Mammary epithelial cell (primary cell): ENCODE measurements at regions of chr15 and their contacts with region 1.

Region 1: GRCh38 chr15:73677146-73677607 is 7.0 kb upstream of the CD276 start:
- DNase-seq: peak; percentile 55
- H3K4me3 ChIP-seq: no peak overlapping the region
- H3K27ac ChIP-seq: no peak overlapping the region
- H3K4me1 ChIP-seq: no peaks in the 10 kb centered on the region
- H3K27me3 ChIP-seq: no peaks in the 10 kb centered on the region
- CTCF ChIP-seq: peak; percentile 88 to 89

Region 2: DNA sequence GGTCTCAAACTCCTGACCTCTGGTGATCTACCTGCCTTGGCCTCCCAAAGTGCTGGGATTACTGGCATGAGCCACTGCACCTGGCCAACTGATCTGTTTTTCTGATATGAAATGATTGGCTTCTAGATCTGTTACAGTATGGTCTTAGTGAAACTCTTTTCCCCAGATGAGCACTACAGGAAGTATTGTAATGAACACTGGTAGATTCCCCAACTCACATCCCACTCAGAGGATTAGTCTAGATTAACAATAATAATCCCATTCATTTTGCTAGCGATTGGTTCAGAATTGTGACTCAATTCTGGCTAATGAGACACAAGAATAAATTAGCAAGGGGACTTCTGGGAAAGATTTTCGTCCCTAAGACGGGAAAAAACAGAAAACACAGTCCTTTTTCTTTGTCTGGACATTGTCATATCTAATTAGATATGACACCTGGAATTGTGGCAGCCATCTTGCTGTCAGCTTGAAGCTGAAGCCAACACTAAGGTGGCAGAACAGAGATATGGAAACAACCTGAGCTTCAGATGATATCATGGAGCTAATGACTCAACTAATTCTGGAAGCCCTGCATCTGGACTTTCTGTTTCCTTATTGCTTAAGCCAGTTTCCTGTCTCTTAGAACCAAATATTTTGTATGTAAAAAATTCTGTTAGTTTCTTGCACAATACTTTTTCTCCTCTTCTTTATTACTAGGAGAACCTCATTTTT is 26.6 kb before region 1 on chr15:
- CTCF ChIA-PET with region 1: no interaction called
- dilution Hi-C with region 1: no loop called
- in situ Hi-C with region 1: no loop called
- intact Hi-C with region 1: loop called (anchors 2 kb)
- DNase-seq: peak; percentile 64
- H3K4me3 ChIP-seq: no peak overlapping the region
- H3K27ac ChIP-seq: no peak overlapping the region
- H3K4me1 ChIP-seq: peaks cover 26% of the 10 kb centered on the region
- H3K27me3 ChIP-seq: no peaks in the 10 kb centered on the region
- CTCF ChIP-seq: no peak